ENCODE measurements at regions of chrX and their contacts with region 1.

Region 1: DNA sequence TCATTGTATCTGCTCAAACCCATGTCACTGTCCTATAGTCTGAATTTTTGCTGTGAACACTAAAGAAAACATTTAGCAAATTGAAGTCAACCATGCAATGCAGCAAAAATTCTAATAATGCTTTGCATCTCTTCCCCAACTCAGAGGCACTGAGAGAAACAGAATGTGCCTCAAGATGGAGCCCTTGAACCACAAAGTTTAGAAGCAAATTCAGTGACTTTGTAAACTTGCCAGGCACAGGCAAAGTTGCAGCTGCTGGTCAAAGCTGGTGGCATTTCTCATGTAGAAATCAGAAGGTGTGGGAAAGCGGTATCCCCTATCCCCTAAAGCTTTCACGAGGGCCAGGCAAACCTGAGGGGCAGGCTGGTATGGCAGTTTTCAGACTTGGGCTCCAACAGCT is 121.7 kb upstream of the DIPK2B start:
- DNase-seq: peak; percentile 74
- H3K4me3 ChIP-seq: no peak overlapping the region
- H3K27ac ChIP-seq: peak overlapping the region; percentile 43
- H3K4me1 ChIP-seq: peaks cover 14% of the 10 kb centered on the region
- H3K27me3 ChIP-seq: no peaks in the 10 kb centered on the region
- CTCF ChIP-seq: peak; percentile 66 to 74

Region 2: GRCh38 chrX:45240301-45240700 is 82.1 kb before region 1 on chrX:
- CTCF ChIA-PET with region 1: no interaction called
- dilution Hi-C with region 1: no loop called
- in situ Hi-C with region 1: no loop called
- intact Hi-C with region 1: no loop called
- DNase-seq: no peak
- H3K4me3 ChIP-seq: no peak overlapping the region
- H3K27ac ChIP-seq: no peak overlapping the region
- H3K4me1 ChIP-seq: no peaks in the 10 kb centered on the region
- H3K27me3 ChIP-seq: peaks cover 6% of the 10 kb centered on the region
- CTCF ChIP-seq: no peak

Region 3: GRCh38 chrX:45309096-45309495 is 13.3 kb before region 1 on chrX:
- CTCF ChIA-PET with region 1: no interaction called
- dilution Hi-C with region 1: no loop called
- in situ Hi-C with region 1: no loop called
- intact Hi-C with region 1: no loop called
- DNase-seq: no peak
- H3K4me3 ChIP-seq: no peak overlapping the region
- H3K27ac ChIP-seq: no peak overlapping the region
- H3K4me1 ChIP-seq: no peaks in the 10 kb centered on the region
- H3K27me3 ChIP-seq: peaks cover 2% of the 10 kb centered on the region
- CTCF ChIP-seq: no peak

Region 4: GRCh38 chrX:45434231-45434630 is 111.8 kb after region 1 on chrX:
- CTCF ChIA-PET with region 1: no interaction called
- dilution Hi-C with region 1: no loop called
- in situ Hi-C with region 1: no loop called
- intact Hi-C with region 1: loop called (anchors 2 kb)
- DNase-seq: peak; percentile 95
- H3K4me3 ChIP-seq: no peak overlapping the region
- H3K27ac ChIP-seq: peak overlapping the region; percentile 48
- H3K4me1 ChIP-seq: peaks cover 27% of the 10 kb centered on the region
- H3K27me3 ChIP-seq: no peaks in the 10 kb centered on the region
- CTCF ChIP-seq: no peak

Region 5: DNA sequence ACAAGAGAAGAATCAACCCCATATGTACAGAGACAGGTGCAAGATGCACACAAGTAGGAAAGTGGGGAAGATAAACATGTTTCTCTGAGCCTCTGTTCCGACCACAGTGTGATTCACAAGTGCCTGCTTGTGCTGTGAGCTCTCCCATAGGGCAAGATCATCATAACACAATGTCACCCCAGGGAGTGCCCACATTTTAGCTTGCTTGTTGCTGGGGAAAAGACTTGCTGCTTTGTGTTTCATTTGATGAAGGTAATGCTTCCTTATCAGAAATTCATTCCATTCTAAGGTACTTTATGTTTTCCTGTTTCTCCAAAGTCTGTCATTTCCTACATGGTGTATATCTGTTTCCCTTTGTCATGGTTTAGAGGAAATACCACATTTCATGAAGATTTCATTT is 182.8 kb after region 1 on chrX:
- CTCF ChIA-PET with region 1: interaction called, 3 read pairs
- dilution Hi-C with region 1: no loop called
- in situ Hi-C with region 1: loop called in 1 of 2 experiments (anchors 10 kb)
- intact Hi-C with region 1: loop called (anchors 1 kb)
- DNase-seq: peak; percentile 91
- H3K4me3 ChIP-seq: peak overlapping the region in 1 of 3 experiments; percentile 3
- H3K27ac ChIP-seq: peak overlapping the region; percentile 92
- H3K4me1 ChIP-seq: peaks cover 38% of the 10 kb centered on the region
- H3K27me3 ChIP-seq: no peaks in the 10 kb centered on the region
- CTCF ChIP-seq: no peak

Region 6: GRCh38 chrX:45596188-45596808 is 273.9 kb after region 1 on chrX:
- CTCF ChIA-PET with region 1: no interaction called
- dilution Hi-C with region 1: no loop called
- in situ Hi-C with region 1: no loop called
- intact Hi-C with region 1: loop called (anchors 1 kb)
- DNase-seq: no peak
- H3K4me3 ChIP-seq: no peak overlapping the region
- H3K27ac ChIP-seq: no peak overlapping the region
- H3K4me1 ChIP-seq: no peaks in the 10 kb centered on the region
- H3K27me3 ChIP-seq: no peaks in the 10 kb centered on the region
- CTCF ChIP-seq: peak in 1 of 2 donors; percentile 37

Region 7: GRCh38 chrX:45769761-45770582 is 447.6 kb after region 1 on chrX:
- CTCF ChIA-PET with region 1: no interaction called
- dilution Hi-C with region 1: no loop called
- in situ Hi-C with region 1: loop called in 1 of 2 experiments (anchors 25 kb)
- intact Hi-C with region 1: loop called (anchors 1 kb)
- DNase-seq: peak; percentile 86
- H3K4me3 ChIP-seq: peak overlapping the region; percentile 59 to 98 (median 91)
- H3K27ac ChIP-seq: peak overlapping the region; percentile 98
- H3K4me1 ChIP-seq: peaks cover 41% of the 10 kb centered on the region
- H3K27me3 ChIP-seq: no peaks in the 10 kb centered on the region
- CTCF ChIP-seq: no peak

Region 8: DNA sequence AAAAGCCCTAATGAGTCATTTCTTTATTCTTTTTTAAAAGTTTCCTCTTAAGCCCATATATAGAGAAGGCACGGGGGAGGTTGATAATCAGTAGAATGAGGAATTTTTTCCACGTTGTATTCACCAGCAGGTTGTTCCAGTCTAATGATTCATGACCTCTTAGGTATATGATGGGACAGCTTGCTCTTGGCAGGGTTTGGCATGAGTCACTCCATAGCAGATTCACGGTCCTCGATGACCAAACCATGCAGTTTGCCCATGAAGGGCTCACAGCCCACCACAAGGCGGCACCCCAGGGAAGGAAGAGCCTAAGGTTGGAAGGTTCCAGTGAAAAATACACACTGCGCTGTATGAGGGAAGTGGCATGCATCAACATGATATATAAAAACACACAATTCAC is 502.1 kb after region 1 on chrX:
- CTCF ChIA-PET with region 1: no interaction called
- dilution Hi-C with region 1: no loop called
- in situ Hi-C with region 1: no loop called
- intact Hi-C with region 1: loop called (anchors 5 kb)
- DNase-seq: peak; percentile 98
- H3K4me3 ChIP-seq: no peak overlapping the region
- H3K27ac ChIP-seq: peak overlapping the region; percentile 67
- H3K4me1 ChIP-seq: peaks cover 11% of the 10 kb centered on the region
- H3K27me3 ChIP-seq: no peaks in the 10 kb centered on the region
- CTCF ChIP-seq: peak; percentile 96 to 98

Region 9: DNA sequence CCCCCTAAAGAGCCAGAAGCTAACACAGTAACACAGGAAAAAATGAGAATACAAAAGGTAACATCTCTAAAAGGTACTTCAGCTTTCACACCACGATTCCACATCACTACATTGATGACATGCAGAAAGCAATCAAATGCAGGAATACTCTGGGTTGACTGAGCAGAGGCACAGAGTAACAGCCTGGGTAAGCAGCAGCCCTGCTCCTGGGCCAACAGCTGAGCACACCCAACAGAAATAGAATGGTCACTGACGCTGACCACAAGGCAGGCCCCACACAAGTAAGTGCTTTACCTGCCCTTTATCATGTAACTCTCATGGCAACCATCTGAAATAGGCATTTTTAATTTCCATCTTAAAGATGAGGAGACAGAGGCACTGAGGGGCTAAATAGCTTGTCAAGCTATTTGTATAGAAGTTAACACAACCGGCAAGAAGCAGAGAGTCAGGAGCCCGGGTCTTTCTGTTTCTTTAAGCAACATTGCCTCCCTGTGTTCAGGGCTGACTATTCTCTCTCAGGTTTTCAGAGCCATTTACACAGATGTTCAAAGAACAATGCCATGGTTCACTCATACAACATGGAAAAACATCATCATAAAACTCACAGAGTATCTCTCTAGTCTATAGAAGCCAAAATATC is 1054.0 kb after region 1 on chrX:
- CTCF ChIA-PET with region 1: no interaction called
- dilution Hi-C with region 1: no loop called
- in situ Hi-C with region 1: no loop called
- intact Hi-C with region 1: loop called (anchors 1 kb)
- DNase-seq: peak; percentile 61
- H3K4me3 ChIP-seq: no peak overlapping the region
- H3K27ac ChIP-seq: peak overlapping the region; percentile 7
- H3K4me1 ChIP-seq: peaks cover 20% of the 10 kb centered on the region
- H3K27me3 ChIP-seq: no peaks in the 10 kb centered on the region
- CTCF ChIP-seq: peak; percentile 50 to 61